WTC11 (cell line): ENCODE measurements at regions of chr6 and their contacts with region 1.

Region 1: GRCh38 chr6:79694625-79695343 is 63.7 kb downstream of the SH3BGRL2 start:
- DNase-seq: peak; percentile 44
- ATAC-seq: peak; percentile 62
- H3K4me3 Mint-ChIP-seq: no peak overlapping the region
- H3K27ac Mint-ChIP-seq: no peak overlapping the region
- H3K4me1 Mint-ChIP-seq: peaks cover 32% of the 10 kb centered on the region
- H3K27me3 Mint-ChIP-seq: no peaks in the 10 kb centered on the region
- CTCF ChIP-seq: peak; percentile 40; the same call in 1 of the 2 replicates

Region 2: DNA sequence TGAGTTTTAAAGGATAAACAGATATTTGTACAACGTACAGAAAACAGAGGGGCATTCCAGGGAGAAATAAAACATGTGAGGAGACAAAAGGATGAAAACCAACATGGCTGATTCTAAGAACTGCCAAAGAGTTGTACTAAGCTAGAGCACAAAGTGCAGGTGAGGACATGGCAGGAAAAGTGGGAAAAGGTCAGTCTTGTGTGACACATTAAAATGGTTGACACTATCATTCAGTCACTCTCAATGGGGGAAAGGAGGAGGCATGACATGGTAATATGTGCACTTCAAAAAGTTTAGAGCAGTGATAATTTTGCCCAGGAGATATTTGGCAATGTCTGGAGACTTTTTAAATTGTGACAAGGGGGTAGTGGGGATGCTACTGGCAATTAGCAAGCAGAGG is 638.6 kb before region 1 on chr6:
- CTCF ChIA-PET with region 1: no interaction called
- POLR2A ChIA-PET with region 1: no interaction called
- DNase-seq: no peak
- ATAC-seq: no peak
- H3K4me3 Mint-ChIP-seq: no peak overlapping the region
- H3K27ac Mint-ChIP-seq: peak overlapping the region; percentile 19; the same call in 1 of the 2 replicates
- H3K4me1 Mint-ChIP-seq: peaks cover 13% of the 10 kb centered on the region
- H3K27me3 Mint-ChIP-seq: no peaks in the 10 kb centered on the region
- CTCF ChIP-seq: no peak

Region 3: GRCh38 chr6:79404681-79405156 is 290.1 kb before region 1 on chr6:
- CTCF ChIA-PET with region 1: no interaction called
- POLR2A ChIA-PET with region 1: no interaction called
- DNase-seq: peak; percentile 17
- ATAC-seq: peak; percentile 61
- H3K4me3 Mint-ChIP-seq: no peak overlapping the region
- H3K27ac Mint-ChIP-seq: no peak overlapping the region
- H3K4me1 Mint-ChIP-seq: peaks cover 21% of the 10 kb centered on the region
- H3K27me3 Mint-ChIP-seq: no peaks in the 10 kb centered on the region
- CTCF ChIP-seq: no peak

Region 4: GRCh38 chr6:79470728-79471127 is 224.1 kb before region 1 on chr6:
- CTCF ChIA-PET with region 1: no interaction called
- POLR2A ChIA-PET with region 1: no interaction called
- DNase-seq: no peak
- ATAC-seq: no peak
- H3K4me3 Mint-ChIP-seq: no peak overlapping the region
- H3K27ac Mint-ChIP-seq: no peak overlapping the region
- H3K4me1 Mint-ChIP-seq: no peaks in the 10 kb centered on the region
- H3K27me3 Mint-ChIP-seq: no peaks in the 10 kb centered on the region
- CTCF ChIP-seq: no peak

Region 5: DNA sequence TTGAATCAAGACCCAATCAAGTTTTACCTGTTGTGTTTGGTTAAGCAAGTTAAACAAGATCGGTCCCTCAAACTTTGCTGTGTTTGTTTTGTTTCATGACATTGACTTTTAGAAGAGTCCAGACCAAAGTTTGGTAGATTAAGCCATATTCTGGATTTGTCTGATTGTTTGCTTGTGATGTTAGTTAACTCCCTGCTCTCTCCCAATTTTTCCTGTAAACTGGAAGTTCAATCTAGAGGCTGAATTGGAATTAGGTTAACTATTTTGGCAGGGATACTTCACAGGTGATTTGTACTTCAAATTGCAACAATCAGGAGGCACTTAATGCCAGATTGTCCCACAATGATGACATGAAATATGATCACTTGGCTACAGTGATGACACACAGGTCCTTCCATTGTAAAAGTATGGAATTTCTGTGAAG is 77.3 kb before region 1 on chr6:
- CTCF ChIA-PET with region 1: no interaction called
- POLR2A ChIA-PET with region 1: no interaction called
- DNase-seq: no peak
- ATAC-seq: no peak
- H3K4me3 Mint-ChIP-seq: no peak overlapping the region
- H3K27ac Mint-ChIP-seq: no peak overlapping the region
- H3K4me1 Mint-ChIP-seq: peaks cover 14% of the 10 kb centered on the region
- H3K27me3 Mint-ChIP-seq: no peaks in the 10 kb centered on the region
- CTCF ChIP-seq: no peak

Region 6: DNA sequence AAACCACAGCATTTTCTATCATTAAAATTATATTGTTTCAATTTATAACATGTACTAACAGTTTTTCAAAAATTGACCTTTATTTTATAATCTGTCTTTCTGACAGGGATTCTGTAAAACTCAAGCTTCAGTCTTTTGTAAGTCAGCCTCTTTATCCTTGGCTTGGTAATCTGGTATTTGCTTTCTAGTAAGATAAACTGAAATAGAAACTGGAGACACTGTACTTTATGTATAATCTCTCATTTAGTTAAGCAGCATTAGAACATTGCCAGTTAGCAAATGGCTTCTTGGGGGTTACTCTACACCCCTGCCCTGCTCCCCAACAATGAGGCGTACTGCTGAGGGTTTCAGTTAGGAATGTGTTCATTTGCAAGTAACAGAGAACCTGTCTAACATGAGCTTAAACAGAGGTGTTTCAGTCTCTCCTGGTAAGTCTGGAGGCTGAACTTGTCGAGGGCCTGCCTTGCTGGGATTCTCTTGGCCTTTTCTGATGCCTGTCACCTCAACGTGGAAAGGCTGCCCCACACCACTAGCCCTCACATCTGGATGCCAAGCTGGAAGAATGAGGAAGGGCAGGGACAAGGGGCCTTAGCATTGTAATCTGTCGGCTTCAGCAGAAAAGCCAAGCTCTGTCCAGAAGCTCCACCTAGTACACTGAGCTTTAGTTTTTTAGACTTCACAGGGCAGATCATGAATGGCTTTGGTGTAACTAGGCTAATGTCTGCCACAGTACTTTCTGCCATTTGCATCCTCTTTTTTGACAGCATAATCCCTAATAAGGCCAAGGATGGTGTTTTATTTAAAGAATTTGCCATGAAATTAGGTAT is 28.8 kb before region 1 on chr6:
- CTCF ChIA-PET with region 1: interaction called, 11 read pairs
- POLR2A ChIA-PET with region 1: no interaction called
- DNase-seq: no peak
- ATAC-seq: peak; percentile 30
- H3K4me3 Mint-ChIP-seq: no peak overlapping the region
- H3K27ac Mint-ChIP-seq: peak overlapping the region; percentile 60
- H3K4me1 Mint-ChIP-seq: peaks cover 47% of the 10 kb centered on the region
- H3K27me3 Mint-ChIP-seq: no peaks in the 10 kb centered on the region
- CTCF ChIP-seq: no peak